ENCODE measurements at regions of chr12 and their contacts with region 1.

Region 1: GRCh38 chr12:89709157-89709994 is 738 bp upstream of the ATP2B1 start:
- DNase-seq: peak; percentile 99
- H3K4me3 Mint-ChIP-seq: peak overlapping the region; percentile 81
- H3K27ac Mint-ChIP-seq: peak overlapping the region; percentile 83
- H3K4me1 Mint-ChIP-seq: peaks cover 33% of the 10 kb centered on the region
- H3K27me3 Mint-ChIP-seq: no peaks in the 10 kb centered on the region

Region 2: GRCh38 chr12:89470741-89471509 is 238.5 kb before region 1 on chr12:
- CTCF ChIA-PET with region 1: no interaction called
- POLR2A ChIA-PET with region 1: no interaction called
- intact Hi-C with region 1: loop called (anchors 5 kb)
- DNase-seq: no peak
- H3K4me3 Mint-ChIP-seq: no peak overlapping the region
- H3K27ac Mint-ChIP-seq: peak overlapping the region; percentile 64
- H3K4me1 Mint-ChIP-seq: peaks cover 58% of the 10 kb centered on the region
- H3K27me3 Mint-ChIP-seq: no peaks in the 10 kb centered on the region

Region 3: DNA sequence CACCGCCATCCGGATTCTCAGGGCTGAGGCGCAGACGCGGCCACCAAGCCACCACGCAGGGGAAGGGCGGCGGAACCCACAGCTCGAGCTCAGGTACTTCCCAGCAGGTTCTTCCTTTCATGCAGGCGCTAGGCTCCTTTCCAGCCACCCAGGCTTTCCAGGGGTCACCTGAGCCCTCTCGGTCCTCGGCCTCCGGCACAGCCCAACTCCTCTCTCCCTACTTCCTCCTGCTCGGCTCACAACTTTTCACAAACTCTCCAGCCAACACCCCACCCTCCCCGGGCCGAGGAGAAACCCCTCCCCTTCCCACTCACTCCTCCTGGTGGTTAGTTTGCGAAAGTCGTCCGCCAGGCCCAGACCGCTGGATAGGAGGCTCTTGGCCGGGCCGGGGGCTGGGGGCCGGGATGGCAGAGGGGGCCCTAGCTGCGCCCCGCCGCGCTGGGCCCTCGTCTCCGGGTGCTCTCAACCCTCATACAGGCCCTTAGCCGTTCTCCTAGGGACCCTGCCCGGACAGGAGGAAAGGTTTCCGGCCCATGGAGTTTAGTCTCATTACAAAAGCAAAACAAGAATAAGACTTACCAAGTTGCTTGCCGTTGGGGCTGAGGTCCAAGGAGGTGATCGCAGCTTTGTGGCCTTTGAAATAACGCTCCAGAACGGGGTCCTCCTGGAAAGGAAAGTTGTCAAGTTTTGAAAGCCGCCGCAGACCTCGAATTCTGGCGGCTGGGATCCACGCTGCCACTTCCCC is 184.7 kb before region 1 on chr12 and contains the start of gene GALNT4:
- CTCF ChIA-PET with region 1: no interaction called
- POLR2A ChIA-PET with region 1: interaction called, 8 read pairs
- intact Hi-C with region 1: loop called (anchors 1 kb)
- DNase-seq: peak; percentile 86
- H3K4me3 Mint-ChIP-seq: peak within 1 kb of the TSS; percentile 99
- H3K27ac Mint-ChIP-seq: peak within 1 kb of the TSS; percentile 98
- H3K4me1 Mint-ChIP-seq: peaks cover 45% of the 10 kb centered on the region
- H3K27me3 Mint-ChIP-seq: no peaks in the 10 kb centered on the region
- total RNA-seq, gene GALNT4: 5.8 to 6.0 TPM

Region 4: DNA sequence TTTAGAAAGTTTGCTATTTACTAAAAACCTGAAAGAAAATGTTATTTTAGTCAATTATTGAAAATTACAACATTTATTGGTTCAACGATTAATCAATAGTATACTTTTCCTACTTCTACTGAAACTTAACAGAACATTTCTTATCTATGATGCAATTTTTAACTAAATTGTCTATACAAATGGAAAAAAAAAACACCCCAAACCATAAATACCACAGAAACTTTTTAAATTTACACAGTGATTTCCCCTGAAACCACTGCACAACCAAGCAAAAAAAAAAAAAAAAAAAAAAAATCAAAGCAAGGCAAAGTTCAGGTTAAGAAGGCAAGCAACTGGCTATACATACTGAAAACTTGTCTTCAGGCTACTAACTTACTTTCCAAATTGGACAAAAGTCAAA is 111.6 kb before region 1 on chr12:
- CTCF ChIA-PET with region 1: no interaction called
- POLR2A ChIA-PET with region 1: interaction called, 3 read pairs
- intact Hi-C with region 1: loop called (anchors 5 kb)
- DNase-seq: no peak
- H3K4me3 Mint-ChIP-seq: no peak overlapping the region
- H3K27ac Mint-ChIP-seq: peak overlapping the region; percentile 33
- H3K4me1 Mint-ChIP-seq: peaks cover 24% of the 10 kb centered on the region
- H3K27me3 Mint-ChIP-seq: no peaks in the 10 kb centered on the region

Region 5: GRCh38 chr12:89862511-89863179 is 153.3 kb after region 1 on chr12:
- CTCF ChIA-PET with region 1: no interaction called
- POLR2A ChIA-PET with region 1: interaction called, 21 read pairs
- intact Hi-C with region 1: loop called (anchors 1 kb)
- DNase-seq: peak; percentile 57
- H3K4me3 Mint-ChIP-seq: peak overlapping the region; percentile 66
- H3K27ac Mint-ChIP-seq: peak overlapping the region; percentile 95
- H3K4me1 Mint-ChIP-seq: peaks cover 67% of the 10 kb centered on the region
- H3K27me3 Mint-ChIP-seq: no peaks in the 10 kb centered on the region

Region 6: GRCh38 chr12:89949457-89950195 is 240.2 kb after region 1 on chr12:
- CTCF ChIA-PET with region 1: interaction called, 3 read pairs
- POLR2A ChIA-PET with region 1: interaction called, 5 read pairs
- intact Hi-C with region 1: loop called (anchors 2 kb)
- DNase-seq: peak; percentile 60
- H3K4me3 Mint-ChIP-seq: peak overlapping the region; percentile 4
- H3K27ac Mint-ChIP-seq: peak overlapping the region; percentile 26
- H3K4me1 Mint-ChIP-seq: peaks cover 51% of the 10 kb centered on the region
- H3K27me3 Mint-ChIP-seq: no peaks in the 10 kb centered on the region

Region 7: DNA sequence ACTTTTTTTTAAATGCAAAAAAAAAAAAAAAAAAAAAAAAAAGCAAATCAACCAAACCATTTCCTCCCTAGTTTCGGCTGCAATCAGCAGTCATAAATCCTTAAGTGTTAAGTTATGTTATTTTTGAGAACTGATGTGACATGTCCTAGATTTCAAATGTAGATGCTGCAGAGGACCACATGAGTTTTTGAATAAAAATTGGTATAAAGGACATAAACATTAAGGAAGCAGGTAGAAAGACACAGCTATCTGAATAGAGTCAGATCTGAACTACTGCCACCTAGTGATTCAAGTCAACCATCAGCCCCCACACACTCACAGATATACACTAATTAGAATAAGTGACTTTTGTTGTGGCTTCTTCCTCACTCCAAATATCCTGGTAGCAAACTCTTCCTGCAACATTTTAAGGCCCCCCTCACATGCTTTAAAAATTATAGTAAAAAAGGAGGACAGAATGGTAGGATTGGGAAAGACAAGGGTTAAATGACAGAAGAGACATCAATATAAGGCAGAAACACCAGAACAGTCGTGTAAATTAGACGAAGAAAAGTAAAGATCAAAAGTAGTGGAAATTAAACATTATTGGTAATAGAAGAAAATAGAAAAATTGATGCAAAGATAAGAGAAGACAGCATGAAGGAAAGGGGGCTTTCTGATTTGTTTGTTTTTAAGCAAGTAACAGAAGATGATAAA is 393.7 kb after region 1 on chr12:
- CTCF ChIA-PET with region 1: interaction called, 5 read pairs
- POLR2A ChIA-PET with region 1: no interaction called
- intact Hi-C with region 1: loop called (anchors 5 kb)
- DNase-seq: peak; percentile 13
- H3K4me3 Mint-ChIP-seq: peak overlapping the region; percentile 19
- H3K27ac Mint-ChIP-seq: no peak overlapping the region
- H3K4me1 Mint-ChIP-seq: peaks cover 13% of the 10 kb centered on the region
- H3K27me3 Mint-ChIP-seq: no peaks in the 10 kb centered on the region